MCF 10A (cell line): ENCODE measurements at regions of chr2 and their contacts with region 1.

Region 1: DNA sequence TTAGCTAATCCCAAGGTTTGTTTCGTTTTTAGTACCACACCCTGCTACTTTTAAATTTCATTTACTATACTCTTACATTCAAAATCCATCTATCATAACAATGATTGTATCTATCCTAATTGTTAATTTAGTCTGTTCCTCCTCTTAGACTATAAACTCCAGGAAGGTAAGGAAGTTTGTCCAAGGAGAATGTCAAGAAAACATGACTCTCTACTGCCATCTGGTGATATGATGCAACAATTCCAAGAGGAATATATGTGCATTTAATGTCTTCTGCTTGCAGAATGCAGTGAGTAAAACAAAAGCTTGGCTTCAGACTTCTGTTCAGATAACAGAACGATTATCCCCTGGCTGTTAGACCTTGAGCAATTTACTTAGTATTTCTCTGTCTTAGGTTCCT is 1267.1 kb downstream of the LRP1B start:
- DNase-seq: peak; percentile 69
- H3K4me3 Mint-ChIP-seq: no peak overlapping the region
- H3K27ac Mint-ChIP-seq: no peak overlapping the region
- H3K4me1 Mint-ChIP-seq: no peaks in the 10 kb centered on the region
- H3K27me3 Mint-ChIP-seq: no peaks in the 10 kb centered on the region
- CTCF ChIP-seq: peak; percentile 52

Region 2: DNA sequence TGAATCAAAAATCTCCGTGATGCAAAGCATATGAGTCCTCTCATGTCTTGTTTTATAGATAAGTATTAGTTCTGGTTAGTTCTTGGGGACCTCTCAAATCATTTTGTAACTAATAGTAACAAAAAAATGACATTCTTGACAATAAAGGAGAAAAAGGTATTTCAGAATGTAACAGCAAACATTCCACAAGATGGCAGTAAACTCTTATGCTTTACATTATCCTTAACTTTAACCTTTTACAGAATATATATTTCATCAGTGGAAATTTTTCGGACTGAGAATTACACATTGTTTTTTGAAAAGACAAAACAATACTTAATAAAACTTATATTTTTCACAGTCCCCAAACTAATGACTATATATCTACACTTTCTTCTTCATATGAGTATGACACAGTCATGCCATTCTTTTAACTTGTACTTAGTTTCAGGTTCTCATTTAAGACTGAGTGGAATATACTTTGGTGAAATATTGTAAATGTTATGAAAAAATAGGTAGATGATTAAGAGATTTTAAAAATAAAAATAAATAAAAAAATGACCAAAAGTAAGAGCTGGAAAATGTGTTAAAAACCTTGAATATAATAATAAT is 1940.6 kb before region 1 on chr2:
- CTCF ChIA-PET with region 1: no interaction called
- POLR2A ChIA-PET with region 1: no interaction called
- intact Hi-C with region 1: loop called (anchors 5 kb)
- DNase-seq: peak; percentile 27
- H3K4me3 Mint-ChIP-seq: no peak overlapping the region
- H3K27ac Mint-ChIP-seq: no peak overlapping the region
- H3K4me1 Mint-ChIP-seq: no peaks in the 10 kb centered on the region
- H3K27me3 Mint-ChIP-seq: peaks cover 52% of the 10 kb centered on the region
- CTCF ChIP-seq: peak; percentile 53

Region 3: DNA sequence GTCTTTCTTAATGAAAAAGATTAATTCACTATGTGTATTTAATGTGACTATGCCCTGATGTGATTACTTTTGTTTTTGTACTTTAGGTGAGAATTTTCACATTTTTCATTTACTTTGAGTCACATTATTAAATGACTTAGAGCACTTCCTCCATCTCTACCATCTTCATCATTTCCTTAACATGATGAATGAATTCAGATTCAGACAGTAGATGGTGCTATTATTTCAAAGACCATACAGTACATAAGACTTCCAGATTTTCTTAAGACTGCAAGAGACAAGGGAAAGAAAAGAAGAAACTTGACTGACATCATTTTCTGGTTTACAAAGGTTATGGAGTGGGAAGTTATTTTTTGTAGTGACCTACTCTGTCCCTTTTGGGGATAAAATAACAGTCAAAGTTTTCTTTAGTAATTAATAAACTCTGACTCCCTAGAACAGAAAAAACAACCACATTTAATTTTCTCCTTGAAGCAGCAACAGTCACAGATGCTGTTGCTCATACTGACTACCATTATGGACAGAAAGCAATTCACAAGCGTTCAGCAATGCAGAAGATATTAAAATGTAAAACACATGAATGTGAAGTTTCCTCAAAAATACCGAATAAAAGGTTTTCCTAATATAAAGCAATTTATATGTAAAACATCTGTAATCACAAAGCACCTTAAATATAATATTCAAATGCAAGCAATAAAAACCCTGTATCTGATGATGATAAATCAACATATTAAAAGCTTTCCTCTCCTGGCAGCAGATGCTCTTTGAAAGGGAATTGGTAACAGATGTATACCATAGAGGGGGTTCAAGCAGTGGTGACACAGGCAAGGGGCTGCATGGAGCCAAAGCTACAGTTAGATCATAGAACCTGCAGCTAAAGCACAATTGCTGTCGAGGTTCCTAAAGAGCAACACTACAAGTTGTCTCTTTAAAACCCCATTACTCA is 1072.6 kb before region 1 on chr2:
- CTCF ChIA-PET with region 1: interaction called, 4 read pairs
- POLR2A ChIA-PET with region 1: no interaction called
- intact Hi-C with region 1: loop called (anchors 5 kb)
- DNase-seq: no peak
- H3K4me3 Mint-ChIP-seq: no peak overlapping the region
- H3K27ac Mint-ChIP-seq: no peak overlapping the region
- H3K4me1 Mint-ChIP-seq: no peaks in the 10 kb centered on the region
- H3K27me3 Mint-ChIP-seq: peaks cover 39% of the 10 kb centered on the region
- CTCF ChIP-seq: no peak

Region 4: DNA sequence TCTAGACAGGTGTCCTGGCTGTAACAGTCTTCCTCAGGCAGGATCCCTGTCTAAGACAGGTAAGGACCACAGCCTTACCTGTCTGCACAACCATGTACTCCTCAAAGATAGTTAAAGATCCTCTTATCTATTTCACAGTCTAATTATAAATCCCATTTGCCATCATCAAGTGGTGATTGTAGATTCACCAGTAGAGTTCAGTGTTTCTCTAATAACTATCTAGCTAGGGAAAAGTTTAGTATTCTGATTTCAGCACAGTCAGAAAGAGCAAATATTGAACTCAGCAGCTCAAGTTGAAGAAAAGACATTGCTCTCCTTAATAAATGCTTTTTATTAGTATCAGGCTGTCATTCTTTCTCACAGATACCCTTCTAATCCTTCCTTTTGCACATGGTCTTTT is 778.0 kb before region 1 on chr2:
- CTCF ChIA-PET with region 1: no interaction called
- POLR2A ChIA-PET with region 1: no interaction called
- intact Hi-C with region 1: loop called (anchors 5 kb)
- DNase-seq: no peak
- H3K4me3 Mint-ChIP-seq: no peak overlapping the region
- H3K27ac Mint-ChIP-seq: no peak overlapping the region
- H3K4me1 Mint-ChIP-seq: no peaks in the 10 kb centered on the region
- H3K27me3 Mint-ChIP-seq: peaks cover 39% of the 10 kb centered on the region
- CTCF ChIP-seq: no peak

Region 5: GRCh38 chr2:140586379-140586778 is 277.3 kb before region 1 on chr2:
- CTCF ChIA-PET with region 1: no interaction called
- POLR2A ChIA-PET with region 1: no interaction called
- intact Hi-C with region 1: loop called (anchors 5 kb)
- DNase-seq: peak; percentile 60
- H3K4me3 Mint-ChIP-seq: no peak overlapping the region
- H3K27ac Mint-ChIP-seq: no peak overlapping the region
- H3K4me1 Mint-ChIP-seq: no peaks in the 10 kb centered on the region
- H3K27me3 Mint-ChIP-seq: peaks cover 64% of the 10 kb centered on the region
- CTCF ChIP-seq: peak; percentile 53

Region 6: DNA sequence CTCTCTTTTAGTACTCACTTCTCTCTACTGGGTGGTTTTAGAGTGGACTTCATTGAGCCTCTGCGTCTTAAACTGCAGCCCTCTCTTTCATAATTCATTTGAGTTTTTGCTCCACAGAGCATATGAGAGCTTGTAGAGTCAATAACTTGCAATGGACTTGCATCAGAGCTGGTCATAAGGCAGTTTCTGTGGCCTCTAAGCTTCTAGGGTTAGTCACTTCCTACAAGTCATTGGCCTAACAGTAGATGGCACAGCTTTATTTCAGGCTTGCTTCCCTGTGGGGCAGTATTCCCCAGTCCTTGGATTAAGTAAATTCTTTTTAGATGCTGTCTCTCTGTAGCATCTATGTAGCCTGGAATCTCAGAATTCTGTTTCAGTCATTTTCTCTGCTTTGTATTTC is 168.6 kb before region 1 on chr2:
- CTCF ChIA-PET with region 1: no interaction called
- POLR2A ChIA-PET with region 1: no interaction called
- intact Hi-C with region 1: loop called (anchors 1 kb)
- DNase-seq: peak; percentile 13
- H3K4me3 Mint-ChIP-seq: no peak overlapping the region
- H3K27ac Mint-ChIP-seq: no peak overlapping the region
- H3K4me1 Mint-ChIP-seq: no peaks in the 10 kb centered on the region
- H3K27me3 Mint-ChIP-seq: peaks cover 39% of the 10 kb centered on the region
- CTCF ChIP-seq: no peak

Region 7: DNA sequence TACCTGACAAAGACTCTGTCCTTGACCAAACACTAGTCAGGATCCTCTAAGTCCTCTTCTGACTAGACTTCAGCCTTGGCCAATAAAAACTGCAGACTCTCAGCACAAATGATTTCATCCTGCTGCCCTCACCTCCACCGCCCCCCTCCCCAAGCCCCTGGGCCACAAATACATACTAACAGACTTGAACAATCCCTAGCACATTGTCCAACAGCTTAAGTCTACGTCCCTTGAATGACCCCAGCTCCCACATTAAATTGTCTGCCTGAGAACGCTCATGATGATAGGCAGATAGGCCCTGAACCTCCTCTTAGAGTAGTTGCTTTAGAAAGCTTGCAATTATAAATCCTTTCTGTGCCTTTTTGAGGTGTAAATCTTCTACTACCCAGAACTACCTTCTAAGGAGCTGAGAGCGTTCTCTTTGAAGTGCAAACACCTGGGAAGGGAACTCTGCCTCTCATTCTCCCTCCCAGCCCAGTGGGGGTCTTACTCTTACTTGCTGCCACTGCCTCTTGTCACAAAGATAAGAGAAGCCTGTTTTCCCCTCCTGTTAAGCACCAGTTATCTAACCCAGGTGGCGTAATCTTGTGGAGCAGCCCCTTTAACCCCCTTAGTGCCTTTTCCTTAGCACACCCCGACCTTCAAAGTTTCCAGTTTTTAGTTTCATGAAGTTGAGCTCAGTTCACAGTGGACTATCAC is 41.5 kb after region 1 on chr2:
- CTCF ChIA-PET with region 1: no interaction called
- POLR2A ChIA-PET with region 1: no interaction called
- intact Hi-C with region 1: no loop called
- DNase-seq: no peak
- H3K4me3 Mint-ChIP-seq: no peak overlapping the region
- H3K27ac Mint-ChIP-seq: no peak overlapping the region
- H3K4me1 Mint-ChIP-seq: no peaks in the 10 kb centered on the region
- H3K27me3 Mint-ChIP-seq: peaks cover 18% of the 10 kb centered on the region
- CTCF ChIP-seq: no peak